Cardiac septum (tissue), 1 donor: ENCODE measurements at regions of chr1 and their contacts with region 1.

Region 1: DNA sequence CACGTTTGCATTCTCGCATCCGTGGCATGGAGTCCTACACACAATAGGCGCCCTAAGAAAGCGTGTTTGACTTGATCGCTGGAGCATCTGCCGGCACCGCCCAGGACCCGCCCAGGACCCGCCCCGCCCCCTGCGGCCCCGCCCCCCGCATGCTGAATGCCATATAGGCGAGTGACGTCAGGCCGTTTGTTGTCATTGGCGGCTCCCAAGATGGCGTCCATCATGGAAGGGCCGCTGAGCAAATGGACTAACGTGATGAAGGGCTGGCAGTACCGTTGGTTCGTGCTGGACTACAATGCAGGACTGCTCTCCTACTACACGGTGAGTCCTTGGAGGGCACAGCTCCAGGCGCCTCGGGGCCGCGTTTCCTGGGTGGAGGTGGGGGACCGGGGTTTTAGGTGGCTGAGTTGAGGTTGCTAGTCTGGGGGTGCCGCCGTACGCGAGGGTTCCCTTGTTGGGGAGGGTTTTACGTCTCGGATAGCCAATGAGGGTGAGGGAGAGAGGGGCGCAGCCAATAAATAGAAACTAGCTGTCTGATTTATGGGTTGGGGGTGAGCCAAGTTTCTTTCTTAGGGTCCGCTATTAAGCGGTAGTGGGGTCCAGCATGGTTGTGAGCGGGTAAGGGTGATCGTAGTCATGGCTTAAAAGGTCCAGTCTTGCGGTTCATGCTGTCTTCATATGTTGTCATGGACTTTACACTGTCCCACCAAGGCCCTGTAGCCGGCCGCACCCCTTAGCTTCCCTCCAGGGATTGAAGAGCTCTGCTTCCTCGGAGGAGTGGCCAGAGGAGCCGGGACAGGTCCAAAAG is at the start of gene OSBPL9:
- DNase-seq: peak; percentile 97
- total RNA-seq, gene OSBPL9: 48.7 TPM

Region 2: DNA sequence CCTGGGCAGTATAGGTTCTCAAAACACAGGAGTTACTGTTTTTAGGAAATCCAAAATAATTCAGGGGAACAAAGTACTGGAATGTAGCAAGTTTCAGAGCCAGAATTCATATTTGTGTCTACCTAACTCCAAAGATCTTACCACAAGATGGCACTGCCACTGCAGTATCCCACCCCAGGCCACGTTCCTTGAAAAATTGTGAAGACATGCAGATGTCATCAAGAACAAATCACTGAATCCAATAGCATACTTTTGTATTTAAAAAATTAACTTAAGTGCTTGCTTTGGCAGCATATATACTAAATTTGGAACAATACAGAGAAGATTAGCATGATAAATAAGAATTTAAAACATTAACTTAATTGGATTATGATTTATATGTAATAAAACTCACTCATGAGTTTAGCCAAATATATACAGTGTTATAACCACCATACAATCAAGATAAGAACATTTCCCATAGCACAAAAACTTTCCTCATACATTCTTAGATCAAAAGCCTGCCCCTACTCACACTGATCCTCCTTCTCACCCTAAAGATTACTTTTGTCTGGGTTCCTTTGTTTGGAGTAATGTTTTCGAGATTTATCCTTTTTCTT is 867.0 kb before region 1 on chr1:
- intact Hi-C with region 1: no loop called
- DNase-seq: no peak

Region 3: GRCh38 chr1:51661081-51661518 is 44.0 kb after region 1 on chr1:
- intact Hi-C with region 1: loop called (anchors 5 kb)
- DNase-seq: no peak

Region 4: DNA sequence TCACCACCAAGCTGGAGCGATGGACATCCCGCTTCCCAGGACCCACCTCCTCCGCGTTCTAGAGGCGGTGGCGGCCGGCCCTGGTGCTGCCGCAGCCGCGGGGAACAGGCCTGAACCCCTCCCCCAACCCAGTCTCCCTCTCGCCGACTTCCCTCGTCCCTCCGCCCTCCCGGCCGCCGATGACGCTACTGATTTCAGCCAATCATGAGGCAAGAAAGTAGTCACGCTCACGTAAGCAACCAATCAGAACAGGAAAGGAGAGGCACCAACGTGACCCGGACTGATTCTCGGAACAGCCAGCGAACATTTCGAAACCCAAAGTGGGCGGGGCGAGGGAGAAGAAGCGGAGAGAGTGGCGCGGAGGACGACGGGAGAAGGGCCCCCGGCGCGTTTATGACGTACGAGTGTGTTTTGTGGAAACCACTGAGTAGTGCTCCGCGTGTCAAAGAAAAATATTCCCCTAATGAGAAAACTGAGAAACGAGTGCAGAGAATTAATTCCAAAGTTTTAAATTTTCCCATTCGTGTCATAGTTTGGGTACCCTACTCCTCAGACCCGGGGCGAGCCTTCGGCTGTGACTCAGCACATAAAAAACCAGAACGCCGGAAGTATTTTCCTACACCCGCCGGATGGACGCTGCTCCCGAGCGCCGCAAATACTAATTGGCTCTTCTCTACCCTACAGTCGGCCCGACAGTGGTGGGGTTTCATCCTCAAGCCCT is 261.7 kb after region 1 on chr1 and contains the start of gene NRDC:
- intact Hi-C with region 1: loop called (anchors 5 kb)
- DNase-seq: peak; percentile 99
- total RNA-seq, gene NRDC: 111 TPM